CD4-positive, alpha-beta memory T cell (primary cell): ENCODE measurements at regions of chr6 and their contacts with region 1.

Region 1: DNA sequence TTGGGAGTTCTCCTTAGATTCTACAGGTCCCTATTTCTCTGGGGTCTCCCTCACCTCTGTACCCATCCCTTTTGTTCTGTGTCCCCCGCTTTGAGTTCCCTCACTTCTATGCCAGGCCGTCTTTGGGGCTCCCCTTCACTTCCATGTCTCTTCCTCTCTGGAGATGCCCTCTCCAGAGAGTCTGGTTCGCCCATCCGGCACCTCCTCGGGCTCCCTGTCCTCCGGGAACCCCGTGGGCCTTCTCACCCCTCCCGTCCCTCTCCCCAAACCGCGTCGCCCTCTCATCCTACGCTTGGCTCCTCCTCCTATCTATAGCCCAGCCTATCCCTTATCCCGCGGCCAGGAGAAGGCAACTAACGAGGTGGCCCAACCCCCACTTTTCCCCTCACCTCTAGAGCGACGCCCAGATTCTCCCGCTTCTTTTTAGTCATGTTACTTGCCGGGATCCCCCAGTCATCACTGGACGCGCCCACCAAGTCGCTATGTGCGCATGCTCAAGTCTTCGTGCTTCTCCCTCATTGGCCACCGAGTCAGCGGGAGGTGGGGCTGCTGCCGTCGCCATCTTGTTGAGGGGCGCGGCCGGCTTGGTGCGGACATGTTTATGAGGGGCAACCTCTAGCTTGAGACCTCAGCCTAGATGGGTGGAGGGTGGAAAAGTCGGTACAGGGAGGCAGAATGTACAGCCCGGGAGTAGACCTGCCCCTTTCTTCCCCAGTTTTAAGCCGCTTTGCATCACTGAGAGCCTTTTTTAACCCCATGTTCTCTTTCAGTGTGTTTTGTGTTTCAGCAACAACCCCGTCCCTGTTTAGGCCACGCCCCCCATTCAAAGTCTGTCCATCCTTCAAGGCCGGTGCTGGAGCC is at the start of gene CCDC167:
- DNase-seq: peak; percentile 92 to 98 (median 94)
- H3K4me3 ChIP-seq: peak within 1 kb of the TSS; percentile 80 to 90
- H3K4me3 Mint-ChIP-seq: peak within 1 kb of the TSS; percentile 95 to 99 (median 97)
- H3K27ac ChIP-seq: peak within 1 kb of the TSS; percentile 91
- H3K27ac Mint-ChIP-seq: peak within 1 kb of the TSS; percentile 98 to 100 (median 100)
- H3K4me1 ChIP-seq: peaks cover 90% of the 10 kb centered on the region
- H3K4me1 Mint-ChIP-seq: peaks cover 60 to 97% (median 82%) of the 10 kb centered on the region in 4 donors
- H3K27me3 ChIP-seq: no peaks in the 10 kb centered on the region
- H3K27me3 Mint-ChIP-seq: no peaks in the 10 kb centered on the region
- total RNA-seq, gene CCDC167: 25.1 to 27.8 TPM

Region 2: GRCh38 chr6:37432916-37433656 is 66.6 kb before region 1 on chr6 and contains the start of gene CMTR1:
- CTCF ChIA-PET with region 1: no interaction called
- POLR2A ChIA-PET with region 1: interaction called, 19 read pairs
- intact Hi-C with region 1: loop called (anchors 5 kb)
- DNase-seq: peak; percentile 97 to 98 (median 97)
- H3K4me3 ChIP-seq: peak within 1 kb of the TSS; percentile 61 to 95
- H3K4me3 Mint-ChIP-seq: peak within 1 kb of the TSS; percentile 92 to 98 (median 93)
- H3K27ac ChIP-seq: peak within 1 kb of the TSS; percentile 96
- H3K27ac Mint-ChIP-seq: peak within 1 kb of the TSS; percentile 95 to 100 (median 97)
- H3K4me1 ChIP-seq: peaks cover 32% of the 10 kb centered on the region
- H3K4me1 Mint-ChIP-seq: peaks cover 24 to 52% (median 40%) of the 10 kb centered on the region in 4 donors
- H3K27me3 ChIP-seq: no peaks in the 10 kb centered on the region
- H3K27me3 Mint-ChIP-seq: peaks cover 3 to 5% of the 10 kb centered on the region in 2 donors
- total RNA-seq, gene CMTR1: 75.0 to 79.1 TPM

Region 3: DNA sequence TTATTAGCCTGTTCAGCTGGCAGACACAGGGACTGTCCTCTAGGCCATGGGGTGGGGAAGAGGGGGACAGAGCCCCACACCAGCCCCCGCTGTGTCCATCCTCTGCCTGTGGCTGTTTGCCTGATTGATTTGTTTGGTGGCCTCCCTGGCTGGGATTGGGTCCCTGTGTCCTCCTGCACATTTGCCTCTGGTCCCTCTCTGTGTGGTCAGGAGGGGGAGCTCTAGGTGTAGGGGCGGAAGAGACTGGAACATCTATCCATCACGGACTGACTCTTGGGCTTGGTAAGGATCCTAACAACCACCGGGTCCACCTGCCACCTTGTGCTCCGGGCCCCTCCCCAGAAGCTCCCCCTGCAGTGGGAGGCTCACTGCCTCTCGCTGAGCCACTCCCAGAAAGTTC is 38.4 kb after region 1 on chr6:
- CTCF ChIA-PET with region 1: interaction called, 3 read pairs
- POLR2A ChIA-PET with region 1: interaction called, 20 read pairs
- intact Hi-C with region 1: loop called (anchors 5 kb)
- DNase-seq: no peak
- H3K4me3 ChIP-seq: no peak overlapping the region
- H3K4me3 Mint-ChIP-seq: no peak overlapping the region
- H3K27ac ChIP-seq: no peak overlapping the region
- H3K27ac Mint-ChIP-seq: peak overlapping the region in 5 of 7 donors; percentile 50 to 92 (median 71)
- H3K4me1 ChIP-seq: peaks cover 10% of the 10 kb centered on the region
- H3K4me1 Mint-ChIP-seq: peaks cover 3 to 27% (median 21%) of the 10 kb centered on the region in 4 donors
- H3K27me3 ChIP-seq: no peaks in the 10 kb centered on the region
- H3K27me3 Mint-ChIP-seq: no peaks in the 10 kb centered on the region

Region 4: GRCh38 chr6:37547564-37548061 is 48.0 kb after region 1 on chr6:
- CTCF ChIA-PET with region 1: interaction called, 6 read pairs
- POLR2A ChIA-PET with region 1: interaction called, 38 read pairs
- intact Hi-C with region 1: no loop called
- DNase-seq: peak in 3 of 5 donors; percentile 25 to 43 (median 39)
- H3K4me3 ChIP-seq: no peak overlapping the region
- H3K4me3 Mint-ChIP-seq: peak overlapping the region; percentile 8 to 75 (median 68)
- H3K27ac ChIP-seq: peak overlapping the region; percentile 13
- H3K27ac Mint-ChIP-seq: peak overlapping the region; percentile 80 to 97 (median 94)
- H3K4me1 ChIP-seq: peaks cover 28% of the 10 kb centered on the region
- H3K4me1 Mint-ChIP-seq: peaks cover 11 to 53% (median 40%) of the 10 kb centered on the region in 4 donors
- H3K27me3 ChIP-seq: no peaks in the 10 kb centered on the region
- H3K27me3 Mint-ChIP-seq: no peaks in the 10 kb centered on the region

Region 5: DNA sequence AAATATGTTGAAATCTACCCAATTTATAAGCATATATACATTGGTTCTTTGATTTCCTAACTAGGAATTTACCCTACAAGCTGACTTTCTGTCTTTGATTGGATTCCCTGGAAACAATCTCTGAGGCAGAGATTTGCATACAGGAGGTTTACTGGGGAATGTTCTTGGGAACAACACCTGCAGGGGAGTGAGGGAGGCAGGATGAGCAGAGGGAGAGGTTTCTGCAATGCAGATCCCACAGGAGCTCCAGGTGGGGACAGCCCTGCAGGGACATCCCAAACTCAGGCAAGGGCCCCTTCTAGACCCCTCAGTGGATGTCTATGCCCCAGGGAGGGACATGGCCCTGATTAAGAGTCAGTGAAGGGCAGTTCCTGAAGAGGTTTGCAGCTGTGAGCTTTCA is 95.2 kb after region 1 on chr6:
- CTCF ChIA-PET with region 1: no interaction called
- POLR2A ChIA-PET with region 1: no interaction called
- intact Hi-C with region 1: no loop called
- DNase-seq: no peak
- H3K4me3 ChIP-seq: no peak overlapping the region
- H3K4me3 Mint-ChIP-seq: no peak overlapping the region
- H3K27ac ChIP-seq: no peak overlapping the region
- H3K27ac Mint-ChIP-seq: peak overlapping the region in 1 of 7 donors; percentile 40
- H3K4me1 ChIP-seq: no peaks in the 10 kb centered on the region
- H3K4me1 Mint-ChIP-seq: peaks cover 0 to 2% (median 0%) of the 10 kb centered on the region in 4 donors
- H3K27me3 ChIP-seq: no peaks in the 10 kb centered on the region
- H3K27me3 Mint-ChIP-seq: peaks cover 0 to 2% of the 10 kb centered on the region in 2 donors